ENCODE measurements at regions of chr10 and their contacts with region 1.

Region 1: GRCh38 chr10:86960003-86960862 is 1.8 kb downstream of the SNCG start:
- DNase-seq: peak; percentile 69 to 72
- H3K4me3 ChIP-seq: peak overlapping the region; percentile 72
- H3K27ac ChIP-seq: peak overlapping the region; percentile 80
- H3K4me1 ChIP-seq: peaks cover 45% of the 10 kb centered on the region
- H3K27me3 ChIP-seq: no peaks in the 10 kb centered on the region
- CTCF ChIP-seq: peak; percentile 94

Region 2: DNA sequence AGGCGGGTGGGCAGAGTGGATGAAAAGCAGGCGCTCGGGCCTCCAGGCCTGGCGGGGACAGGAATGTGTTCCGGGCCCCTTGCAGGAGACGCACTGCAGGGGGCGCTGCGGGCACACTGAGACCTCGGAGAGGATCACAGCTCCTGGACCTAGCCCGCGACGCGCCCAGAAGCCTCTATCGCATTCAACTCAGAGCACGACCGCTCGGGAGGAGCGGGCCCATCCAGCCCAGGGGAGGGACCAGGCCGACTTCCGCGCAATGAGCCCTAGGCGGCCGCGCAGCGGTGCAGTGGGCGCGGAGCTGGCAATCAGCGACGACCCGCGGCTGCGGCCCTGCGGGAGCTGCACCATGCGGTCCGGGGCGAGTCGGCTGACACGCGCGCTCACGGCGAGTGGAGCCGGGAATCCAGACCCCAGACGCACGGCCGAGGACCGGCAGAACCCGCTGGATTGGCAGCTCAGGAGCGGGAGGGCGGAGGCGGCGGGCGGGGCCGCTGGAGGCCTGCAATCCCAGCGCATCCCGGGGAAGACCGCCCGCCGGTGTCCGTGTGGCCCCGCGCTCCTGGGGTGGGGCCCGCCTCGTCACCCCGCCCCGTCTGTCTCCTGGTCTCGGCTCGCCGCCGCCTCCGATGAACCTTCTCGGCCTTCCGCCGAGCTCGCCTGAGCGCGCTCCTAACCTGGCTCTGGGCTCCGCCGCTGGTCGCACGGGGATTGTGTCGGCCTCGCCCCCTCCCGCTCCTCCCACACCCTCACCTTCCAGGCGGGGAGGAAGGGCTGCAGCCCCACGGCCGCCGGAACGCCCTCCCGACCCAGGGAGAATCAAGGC is 560.1 kb before region 1 on chr10:
- CTCF ChIA-PET with region 1: no interaction called
- POLR2A ChIA-PET with region 1: no interaction called
- intact Hi-C with region 1: loop called (anchors 5 kb)
- DNase-seq: peak; percentile 81 to 86
- H3K4me3 ChIP-seq: peak overlapping the region; percentile 66
- H3K27ac ChIP-seq: no peak overlapping the region
- H3K4me1 ChIP-seq: no peaks in the 10 kb centered on the region
- H3K27me3 ChIP-seq: no peaks in the 10 kb centered on the region
- CTCF ChIP-seq: peak; percentile 75

Region 3: DNA sequence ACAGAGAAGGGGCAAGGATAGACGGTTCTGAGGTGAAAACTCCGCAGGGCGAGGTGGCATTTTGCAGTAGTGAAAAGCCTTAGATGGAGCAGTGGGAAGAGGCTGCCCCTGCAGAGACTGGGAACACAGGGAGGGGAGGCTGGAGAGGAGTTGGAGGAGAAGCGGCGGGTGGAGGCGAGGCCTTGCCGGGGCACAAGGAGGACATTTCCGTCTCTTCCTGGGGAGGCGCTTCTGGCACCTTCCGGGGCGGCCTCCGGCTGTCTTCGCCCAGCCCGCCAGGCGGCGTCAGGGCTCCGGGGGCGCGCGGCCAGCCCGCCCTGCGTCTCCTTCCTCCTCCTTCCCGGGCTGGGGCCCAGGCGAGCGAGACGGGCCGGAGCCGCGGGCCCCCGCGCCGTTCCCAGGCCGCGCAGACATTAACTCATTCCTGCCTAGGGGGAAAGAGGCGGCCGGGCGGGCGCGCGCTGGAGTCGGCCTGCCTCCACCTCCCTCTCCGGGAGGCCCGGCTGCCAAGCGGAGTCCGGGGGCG is 249.2 kb before region 1 on chr10:
- CTCF ChIA-PET with region 1: no interaction called
- POLR2A ChIA-PET with region 1: interaction called, 17 read pairs
- intact Hi-C with region 1: loop called (anchors 5 kb)
- DNase-seq: peak; percentile 56 to 85
- H3K4me3 ChIP-seq: peak overlapping the region; percentile 78; the same call in 1 of the 2 replicates
- H3K27ac ChIP-seq: peak overlapping the region; percentile 34; the same call in 1 of the 2 replicates
- H3K4me1 ChIP-seq: no peaks in the 10 kb centered on the region
- H3K27me3 ChIP-seq: no peaks in the 10 kb centered on the region
- CTCF ChIP-seq: peak; percentile 70

Region 4: DNA sequence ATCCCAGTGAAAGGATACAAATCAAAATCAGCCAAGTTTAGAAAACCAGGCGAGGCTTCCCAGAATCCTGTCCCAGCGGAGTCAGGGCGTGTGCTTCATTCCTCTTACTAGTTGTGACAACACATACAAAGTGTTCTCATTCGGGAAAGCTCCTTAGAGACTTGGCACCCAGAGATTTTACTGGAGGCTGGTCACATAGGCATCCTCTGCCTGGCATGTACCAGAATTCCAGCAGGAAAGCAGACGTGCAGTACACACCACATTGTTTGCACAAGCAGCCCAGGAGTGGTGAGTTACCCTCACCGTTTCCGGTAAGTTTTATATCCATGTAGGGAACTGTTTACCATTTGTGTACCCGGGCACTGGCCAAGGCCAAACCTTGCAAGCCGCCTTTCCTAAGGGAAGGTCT is 37.7 kb before region 1 on chr10:
- CTCF ChIA-PET with region 1: no interaction called
- POLR2A ChIA-PET with region 1: no interaction called
- intact Hi-C with region 1: no loop called
- DNase-seq: no peak
- H3K4me3 ChIP-seq: no peak overlapping the region
- H3K27ac ChIP-seq: no peak overlapping the region
- H3K4me1 ChIP-seq: no peaks in the 10 kb centered on the region
- H3K27me3 ChIP-seq: no peaks in the 10 kb centered on the region
- CTCF ChIP-seq: no peak

Region 5: DNA sequence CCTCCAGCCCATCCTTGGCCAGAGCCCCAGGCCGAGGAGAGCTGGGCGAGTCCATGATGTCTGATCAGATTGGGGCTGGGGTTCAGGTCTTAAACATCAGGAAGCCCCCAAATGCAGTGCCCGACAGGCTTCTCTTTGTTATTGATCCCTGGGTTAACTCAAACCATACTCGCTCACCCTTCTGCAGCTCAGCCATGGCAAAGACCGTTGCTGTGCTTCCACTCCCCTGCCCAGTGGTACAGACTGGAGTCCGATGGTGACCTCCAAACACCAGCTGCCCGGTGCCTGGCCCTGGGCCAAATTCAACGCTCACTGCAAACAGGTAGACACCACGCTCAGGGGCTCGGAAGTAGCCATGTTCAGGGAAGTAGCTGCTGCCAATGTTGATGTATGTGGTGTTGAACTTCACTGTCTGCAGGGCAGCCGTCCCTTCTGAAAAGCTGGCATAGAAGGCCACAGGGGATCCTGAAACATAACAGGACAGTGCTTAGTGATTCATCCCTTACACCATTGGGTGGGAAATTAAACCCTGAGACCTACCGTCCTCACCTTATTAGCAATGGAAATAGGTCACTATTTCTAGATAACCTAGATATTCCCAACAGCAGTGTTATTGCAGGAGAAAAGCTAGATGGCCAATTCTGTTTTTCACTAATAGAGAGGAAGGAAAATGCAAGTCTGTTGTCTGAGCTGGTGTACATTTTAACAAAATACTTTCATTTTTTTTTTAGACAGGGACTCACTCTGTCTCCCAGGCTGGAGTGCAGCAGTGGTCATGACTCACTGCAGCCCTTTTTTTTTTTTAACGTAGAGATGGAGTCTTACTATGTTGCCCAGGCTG is 23.4 kb before region 1 on chr10:
- CTCF ChIA-PET with region 1: interaction called, 22 read pairs
- POLR2A ChIA-PET with region 1: interaction called, 3 read pairs
- intact Hi-C with region 1: loop called (anchors 1 kb)
- DNase-seq: no peak
- H3K4me3 ChIP-seq: no peak overlapping the region
- H3K27ac ChIP-seq: no peak overlapping the region
- H3K4me1 ChIP-seq: peaks cover 11% of the 10 kb centered on the region
- H3K27me3 ChIP-seq: no peaks in the 10 kb centered on the region
- CTCF ChIP-seq: no peak

Region 6: GRCh38 chr10:87045434-87045938 is 85.3 kb after region 1 on chr10:
- CTCF ChIA-PET with region 1: no interaction called
- POLR2A ChIA-PET with region 1: interaction called, 13 read pairs
- intact Hi-C with region 1: no loop called
- DNase-seq: no peak
- H3K4me3 ChIP-seq: no peak overlapping the region
- H3K27ac ChIP-seq: no peak overlapping the region
- H3K4me1 ChIP-seq: no peaks in the 10 kb centered on the region
- H3K27me3 ChIP-seq: no peaks in the 10 kb centered on the region
- CTCF ChIP-seq: no peak